ENCODE measurements at regions of chr19 and their contacts with region 1.

Region 1: DNA sequence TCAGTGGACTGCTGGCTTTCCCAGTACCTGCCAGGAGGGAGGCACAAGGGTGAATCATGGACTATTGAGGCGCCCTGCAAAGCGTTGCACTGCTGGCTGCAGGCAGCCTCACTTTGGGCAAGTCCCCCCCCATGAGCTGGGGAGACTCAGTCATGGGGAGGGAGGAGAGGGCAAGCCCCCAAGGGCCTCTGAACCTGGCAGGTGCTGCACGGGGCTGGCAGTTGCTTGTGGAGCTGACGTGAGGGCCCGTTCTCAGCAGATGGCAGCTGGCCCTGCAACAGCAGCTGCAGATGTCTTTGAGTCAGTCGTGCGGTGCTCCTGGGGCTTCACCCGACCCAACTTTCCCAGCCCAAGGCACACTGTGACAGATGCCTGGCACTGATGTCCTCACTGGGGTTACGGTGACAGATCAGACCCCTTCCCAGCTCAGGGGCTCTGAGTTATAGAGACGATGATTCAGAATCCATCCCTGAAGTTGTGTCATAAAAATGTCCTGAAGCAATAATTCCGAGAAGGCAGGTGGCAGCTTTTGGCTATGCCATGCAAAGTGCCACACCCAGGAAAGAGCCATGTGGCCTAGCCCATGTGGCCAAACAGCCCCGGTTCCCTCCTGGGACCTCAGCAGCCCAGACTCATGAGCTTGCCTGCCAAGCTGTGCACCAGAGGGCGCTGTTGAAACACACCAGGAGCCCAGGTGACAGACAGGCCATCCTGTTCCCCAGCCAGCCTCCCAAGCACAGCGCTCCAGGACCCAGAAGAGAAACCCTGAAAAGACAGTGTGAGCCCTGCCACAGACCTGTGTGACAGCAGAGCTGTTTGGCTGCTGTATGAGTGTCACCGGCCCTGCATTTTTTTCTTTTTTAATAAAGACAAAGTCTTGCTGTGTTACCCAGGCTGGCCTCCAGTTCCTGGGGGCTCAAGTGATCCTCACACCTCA is 53.6 kb upstream of the LDLR start:
- DNase-seq: peak; percentile 97

Region 2: DNA sequence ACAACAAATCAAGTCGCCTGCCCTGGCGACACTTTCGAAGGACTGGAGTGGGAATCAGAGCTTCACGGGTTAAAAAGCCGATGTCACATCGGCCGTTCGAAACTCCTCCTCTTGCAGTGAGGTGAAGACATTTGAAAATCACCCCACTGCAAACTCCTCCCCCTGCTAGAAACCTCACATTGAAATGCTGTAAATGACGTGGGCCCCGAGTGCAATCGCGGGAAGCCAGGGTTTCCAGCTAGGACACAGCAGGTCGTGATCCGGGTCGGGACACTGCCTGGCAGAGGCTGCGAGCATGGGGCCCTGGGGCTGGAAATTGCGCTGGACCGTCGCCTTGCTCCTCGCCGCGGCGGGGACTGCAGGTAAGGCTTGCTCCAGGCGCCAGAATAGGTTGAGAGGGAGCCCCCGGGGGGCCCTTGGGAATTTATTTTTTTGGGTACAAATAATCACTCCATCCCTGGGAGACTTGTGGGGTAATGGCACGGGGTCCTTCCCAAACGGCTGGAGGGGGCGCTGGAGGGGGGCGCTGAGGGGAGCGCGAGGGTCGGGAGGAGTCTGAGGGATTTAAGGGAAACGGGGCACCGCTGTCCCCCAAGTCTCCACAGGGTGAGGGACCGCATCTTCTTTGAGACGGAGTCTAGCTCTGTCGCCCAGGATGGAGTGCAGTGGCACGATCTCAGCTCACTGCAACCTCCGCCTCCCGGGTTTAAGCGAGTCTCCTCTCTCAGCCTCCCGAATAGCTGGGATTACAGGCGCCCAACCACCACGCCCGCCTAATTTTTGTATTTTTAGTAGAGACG is 53.7 kb after region 1 on chr19 and contains the start of gene LDLR:
- intact Hi-C with region 1: loop called in 1 of 2 experiments (anchors 5 kb)
- DNase-seq: peak; percentile 95
- total RNA-seq, gene LDLR: 51.0 to 66.4 TPM

Region 3: DNA sequence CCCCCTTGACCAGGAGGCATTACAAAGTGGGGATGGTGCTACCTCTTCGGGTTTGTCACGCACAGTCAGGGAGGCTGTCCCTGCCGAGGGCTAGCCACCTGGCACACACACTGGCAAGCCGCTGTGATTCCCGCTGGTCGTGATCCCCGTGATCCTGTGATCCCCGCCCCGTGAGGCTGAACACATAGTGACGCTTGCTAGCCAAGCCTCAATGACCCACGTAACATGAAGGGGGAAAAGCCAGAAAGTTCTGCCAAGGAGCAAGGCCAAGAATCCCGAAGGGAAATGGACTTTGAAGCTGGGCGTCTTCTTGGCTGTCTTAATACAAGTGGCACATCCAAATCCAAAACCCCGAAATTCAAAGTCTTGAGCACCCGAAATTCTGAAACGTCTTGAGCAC is 67.2 kb after region 1 on chr19:
- intact Hi-C with region 1: no loop called
- DNase-seq: no peak

Region 4: DNA sequence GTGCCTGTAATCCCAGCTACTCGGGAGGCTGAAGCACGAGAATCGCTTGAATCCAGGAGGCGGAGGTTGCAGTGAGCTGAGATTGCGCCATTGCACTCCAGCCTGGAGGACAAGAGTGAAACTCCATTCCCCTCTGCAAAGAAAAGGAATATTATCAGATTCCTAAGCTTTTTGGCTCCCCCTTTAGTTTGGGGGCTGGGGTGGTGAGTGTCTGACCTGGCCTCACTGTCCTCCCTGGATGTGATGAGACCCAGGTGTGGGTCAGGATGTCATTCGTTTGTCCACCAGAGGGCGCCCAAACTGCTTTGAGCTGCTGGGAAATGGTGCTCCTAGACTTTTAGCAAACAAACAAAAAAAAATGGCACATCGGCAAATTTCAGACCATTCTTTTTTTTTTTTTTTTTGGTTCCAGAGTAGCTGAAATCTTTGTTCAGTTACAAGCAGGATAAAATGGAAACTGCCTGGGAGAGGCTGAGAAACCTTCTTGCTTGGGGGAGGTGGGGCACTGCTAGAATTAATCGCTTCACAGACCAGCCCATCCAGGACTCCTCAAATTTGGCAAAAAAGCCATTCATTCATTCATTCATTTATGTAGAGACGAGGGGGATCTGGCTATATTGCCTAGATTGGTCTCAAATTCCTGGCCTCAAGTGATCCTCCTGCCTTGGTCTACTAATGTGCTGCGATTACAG is 90.4 kb after region 1 on chr19:
- intact Hi-C with region 1: loop called (anchors 5 kb)
- DNase-seq: peak; percentile 93

Region 5: GRCh38 chr19:11203194-11204075 is 167.7 kb after region 1 on chr19:
- intact Hi-C with region 1: loop called (anchors 5 to 10 kb)
- DNase-seq: peak; percentile 93

Measured in posterior vena cava (tissue), 2 donors.